GM13976 (cell line): ENCODE measurements at regions of chr5 and their contacts with region 1.

Region 1: GRCh38 chr5:111158105-111158744 is 66.0 kb upstream of the CAMK4 start:
- DNase-seq: peak; percentile 55
- CTCF ChIP-seq: peak; percentile 95

Region 2: DNA sequence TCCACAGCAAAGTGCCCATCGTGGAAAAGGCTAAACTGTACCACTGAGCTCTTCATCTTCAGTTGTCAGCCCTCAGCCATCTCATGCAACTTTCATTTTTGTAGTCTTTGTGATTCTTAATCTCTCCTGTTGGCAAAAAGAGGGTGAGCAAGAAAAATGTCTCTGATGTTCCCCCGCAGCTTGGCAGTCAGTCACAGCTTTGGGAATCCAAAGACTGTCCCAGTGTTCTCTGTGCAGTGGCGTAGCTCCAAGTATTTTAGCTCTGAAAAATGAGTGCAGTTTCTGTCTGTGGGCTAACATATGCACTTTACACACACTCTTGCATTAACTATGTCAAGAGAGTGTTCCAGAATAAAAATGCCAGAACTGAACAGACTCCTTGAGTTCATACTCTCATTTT is 803.9 kb before region 1 on chr5:
- in situ Hi-C with region 1: no loop called
- DNase-seq: no peak
- CTCF ChIP-seq: no peak

Region 3: GRCh38 chr5:111083323-111083722 is 74.9 kb before region 1 on chr5:
- in situ Hi-C with region 1: no loop called
- DNase-seq: no peak
- CTCF ChIP-seq: no peak

Region 4: DNA sequence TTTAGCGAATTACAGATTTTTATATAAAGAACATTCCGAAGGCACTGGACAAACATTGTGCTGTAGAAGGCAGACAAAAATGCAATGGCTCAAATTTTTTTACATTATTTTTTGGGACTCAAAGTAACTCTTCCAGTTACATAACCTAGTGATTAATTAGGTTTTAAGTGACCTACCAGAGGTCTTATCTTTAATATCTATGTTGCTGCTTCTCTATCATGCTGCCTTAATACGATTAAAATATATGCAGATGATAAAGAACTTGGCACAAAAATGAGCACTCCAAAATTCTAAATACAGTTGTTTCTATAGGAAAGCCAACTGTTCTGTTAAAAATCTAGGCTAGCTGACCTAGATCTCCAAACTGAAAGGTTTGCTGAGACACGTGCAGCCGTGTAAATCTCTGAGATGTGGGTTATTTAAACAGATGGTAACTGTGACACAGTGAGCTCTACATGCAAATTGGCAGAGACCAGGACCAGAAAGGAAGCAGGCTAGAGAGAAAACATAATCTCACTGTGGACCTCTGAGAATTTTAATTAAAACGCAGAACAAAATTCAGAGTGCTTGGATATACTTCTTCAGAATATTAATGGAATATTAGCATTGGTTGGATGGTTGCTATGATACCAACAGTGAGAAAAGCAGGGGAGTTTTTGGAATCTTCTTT is 122.2 kb after region 1 on chr5:
- in situ Hi-C with region 1: loop called (anchors 10 kb)
- DNase-seq: no peak
- CTCF ChIP-seq: no peak

Region 5: DNA sequence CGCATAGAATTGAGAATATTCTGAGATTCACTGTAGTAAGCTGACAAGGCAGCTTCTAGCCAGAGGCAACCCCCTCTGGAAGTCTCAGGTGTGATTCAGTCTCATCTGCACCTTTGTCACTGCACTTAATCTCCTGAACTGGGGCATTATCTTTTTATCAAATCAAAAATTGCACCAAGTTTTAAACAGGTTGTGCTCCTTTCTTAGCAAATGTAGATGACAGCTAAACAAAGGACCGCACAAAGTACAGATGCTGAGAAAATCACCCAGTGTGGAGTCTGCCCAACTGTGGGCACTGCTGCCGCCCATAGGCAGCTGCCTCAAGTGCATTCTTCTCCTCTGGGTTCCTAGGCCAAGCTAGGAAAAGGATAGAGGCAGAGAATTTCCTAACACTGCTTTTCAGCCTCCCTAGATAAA is 303.0 kb after region 1 on chr5:
- in situ Hi-C with region 1: loop called (anchors 25 kb)
- DNase-seq: no peak
- CTCF ChIP-seq: peak; percentile 32